Mammary epithelial cell (primary cell): ENCODE measurements at regions of chr2 and their contacts with region 1.

Region 1: GRCh38 chr2:64888591-64889309 is 100.4 kb upstream of the SLC1A4 start:
- DNase-seq: peak; percentile 80
- H3K4me3 ChIP-seq: no peak overlapping the region
- H3K27ac ChIP-seq: no peak overlapping the region
- H3K4me1 ChIP-seq: no peaks in the 10 kb centered on the region
- H3K27me3 ChIP-seq: no peaks in the 10 kb centered on the region
- CTCF ChIP-seq: peak; percentile 73 to 80

Region 2: DNA sequence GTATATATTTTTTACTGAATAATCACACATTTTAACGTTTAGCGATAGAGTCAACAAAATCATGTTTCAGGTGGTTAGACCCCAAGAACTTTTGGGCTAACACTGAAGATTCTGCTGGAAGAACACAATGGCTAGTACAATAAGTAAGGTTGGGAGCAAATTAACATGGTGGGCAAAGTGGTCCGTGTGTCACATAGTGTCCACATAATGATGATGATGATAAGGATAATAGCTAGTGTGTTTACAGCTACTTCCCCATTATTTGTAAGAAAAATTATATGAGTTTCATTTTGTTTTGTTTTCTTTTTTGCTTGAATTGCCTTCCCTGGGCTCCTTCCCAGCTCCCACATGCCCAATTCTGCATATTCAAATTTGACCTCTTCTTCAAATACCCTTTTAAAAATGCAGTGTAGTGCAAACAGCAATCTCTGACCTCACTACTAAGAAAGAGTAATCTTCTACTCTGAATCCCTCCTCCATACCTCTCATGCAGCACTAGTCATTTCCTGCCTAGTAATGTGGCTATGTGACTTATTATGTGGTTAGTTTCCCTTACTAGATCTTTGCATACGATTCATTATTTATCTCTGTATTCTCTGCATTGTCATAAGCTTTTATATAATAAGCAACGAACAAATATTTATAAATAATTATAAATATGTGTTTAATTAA is 852.6 kb before region 1 on chr2:
- CTCF ChIA-PET with region 1: no interaction called
- dilution Hi-C with region 1: no loop called
- in situ Hi-C with region 1: loop called (anchors 10 to 25 kb)
- intact Hi-C with region 1: no loop called
- DNase-seq: peak; percentile 78
- H3K4me3 ChIP-seq: no peak overlapping the region
- H3K27ac ChIP-seq: no peak overlapping the region
- H3K4me1 ChIP-seq: peaks cover 8% of the 10 kb centered on the region
- H3K27me3 ChIP-seq: no peaks in the 10 kb centered on the region
- CTCF ChIP-seq: no peak

Region 3: GRCh38 chr2:64586883-64587481 is 301.8 kb before region 1 on chr2:
- CTCF ChIA-PET with region 1: no interaction called
- dilution Hi-C with region 1: no loop called
- in situ Hi-C with region 1: no loop called
- intact Hi-C with region 1: loop called (anchors 5 kb)
- DNase-seq: peak; percentile 47
- H3K4me3 ChIP-seq: no peak overlapping the region
- H3K27ac ChIP-seq: no peak overlapping the region
- H3K4me1 ChIP-seq: no peaks in the 10 kb centered on the region
- H3K27me3 ChIP-seq: no peaks in the 10 kb centered on the region
- CTCF ChIP-seq: peak; percentile 59 to 67

Region 4: DNA sequence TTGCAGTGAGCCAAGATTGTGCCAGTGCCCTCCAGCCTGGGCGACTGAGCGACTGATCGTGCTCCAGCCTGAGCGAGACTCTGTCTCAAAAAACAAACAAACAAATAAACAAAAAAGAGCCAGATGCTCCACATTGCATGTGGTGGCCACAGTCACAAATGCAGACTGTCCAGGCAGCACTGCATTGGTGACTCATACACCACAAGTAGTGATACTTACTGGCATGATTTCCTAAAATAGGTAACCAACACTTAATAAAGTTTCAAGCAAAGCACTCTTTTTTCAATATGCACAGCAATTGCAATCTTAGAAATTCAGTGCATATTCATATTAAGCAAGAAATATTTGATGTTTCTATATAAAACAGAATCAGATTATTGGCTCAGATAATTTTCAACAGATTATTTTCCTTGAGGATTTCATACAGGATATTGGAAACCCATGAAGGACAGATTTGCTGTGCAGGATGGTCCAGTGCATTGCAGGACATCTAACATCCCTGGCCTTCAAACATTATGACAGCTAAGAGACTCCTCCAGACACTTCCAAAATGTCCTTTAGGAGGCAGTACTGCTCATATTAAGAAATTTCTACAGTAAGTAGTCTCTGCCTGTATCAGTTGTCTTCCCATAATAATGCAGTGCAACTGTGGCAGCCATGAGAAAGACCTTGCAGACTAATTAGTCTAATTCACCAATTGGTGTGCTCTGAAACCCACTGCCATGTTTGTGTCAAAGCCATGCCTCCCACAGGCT is 89.9 kb after region 1 on chr2:
- CTCF ChIA-PET with region 1: no interaction called
- dilution Hi-C with region 1: no loop called
- in situ Hi-C with region 1: no loop called
- intact Hi-C with region 1: no loop called
- DNase-seq: peak; percentile 58
- H3K4me3 ChIP-seq: no peak overlapping the region
- H3K27ac ChIP-seq: no peak overlapping the region
- H3K4me1 ChIP-seq: peaks cover 35% of the 10 kb centered on the region
- H3K27me3 ChIP-seq: no peaks in the 10 kb centered on the region
- CTCF ChIP-seq: peak in 1 of 2 donors; percentile 27